ENCODE measurements at regions of chr1 and their contacts with region 1.

Region 1: DNA sequence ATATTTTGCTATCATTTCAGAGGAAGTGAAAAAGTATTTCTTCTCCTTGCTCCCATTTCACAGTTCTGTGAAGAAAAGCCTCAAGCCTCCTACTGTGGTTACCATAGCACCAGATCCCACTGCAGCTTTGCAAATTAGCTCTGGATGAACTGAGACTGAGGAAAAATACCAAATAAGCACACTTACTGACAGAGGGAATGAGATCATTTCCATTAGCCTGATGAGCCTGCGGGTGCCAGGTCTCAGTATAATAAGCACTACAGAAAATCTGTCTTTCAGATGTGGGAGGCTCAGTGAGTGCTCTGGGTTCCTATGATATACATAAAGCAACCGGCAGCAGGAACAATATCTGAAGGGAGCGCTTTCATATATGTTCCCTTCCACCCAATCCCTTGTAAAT is 21.4 kb downstream of the XKR8 start:
- DNase-seq: no peak
- H3K4me3 ChIP-seq: no peak overlapping the region
- H3K27ac ChIP-seq: no peak overlapping the region
- H3K4me1 ChIP-seq: peaks cover 0 to 4% of the 10 kb centered on the region in 2 donors
- H3K27me3 ChIP-seq: no peaks in the 10 kb centered on the region
- CTCF ChIP-seq: no peak
- POLR2A ChIP-seq: no peak

Region 2: DNA sequence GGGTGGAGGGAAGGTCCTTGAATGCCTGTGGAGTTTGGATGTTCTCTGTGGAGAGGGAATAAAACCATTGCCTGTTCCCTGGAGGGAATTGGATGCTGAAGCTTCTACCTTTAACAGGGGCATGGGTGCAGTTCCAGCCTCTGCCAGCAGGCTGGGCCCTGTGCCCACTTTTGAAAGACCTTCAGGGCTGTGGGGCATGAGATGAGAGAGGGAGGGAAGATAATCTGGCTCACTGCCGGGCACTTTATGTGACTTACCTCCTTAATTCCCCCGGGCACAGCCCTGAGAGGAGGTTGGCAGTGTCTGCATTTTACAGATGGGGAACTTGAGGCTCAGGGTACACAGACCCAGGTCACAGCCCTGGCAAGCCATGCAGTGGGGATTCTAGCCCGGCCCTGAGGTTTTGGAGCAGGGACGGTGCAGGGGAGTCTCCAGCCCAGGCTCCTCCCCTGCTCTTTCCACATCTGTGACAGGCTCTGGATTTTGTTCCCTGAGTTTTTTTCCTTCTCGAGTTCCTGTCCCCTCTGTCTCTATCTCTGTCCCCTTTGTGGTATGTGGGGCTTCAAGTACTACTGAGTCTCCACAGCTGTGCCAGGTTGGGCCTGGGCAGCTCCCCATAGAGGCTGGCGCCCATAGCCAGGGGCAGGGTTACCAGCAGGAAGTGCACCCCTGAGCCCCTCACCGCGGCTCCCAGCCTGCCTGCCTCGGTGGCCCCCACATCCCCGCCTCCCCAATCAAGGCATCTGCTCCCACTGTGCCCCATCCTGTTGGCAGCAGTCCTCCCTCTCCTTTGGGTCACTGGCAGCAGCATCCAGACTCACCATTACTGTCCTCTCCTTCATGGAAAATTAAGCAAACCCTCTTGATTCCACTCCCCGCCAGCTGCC is 122.8 kb before region 1 on chr1:
- intact Hi-C with region 1: loop called (anchors 5 kb)
- DNase-seq: peak; percentile 96 to 97
- H3K4me3 ChIP-seq: no peak overlapping the region
- H3K27ac ChIP-seq: peak overlapping the region in 1 of 3 donors; percentile 38
- H3K4me1 ChIP-seq: peaks cover 13 to 20% of the 10 kb centered on the region in 2 donors
- H3K27me3 ChIP-seq: no peaks in the 10 kb centered on the region
- CTCF ChIP-seq: peak; percentile 95 to 98 (median 98)
- POLR2A ChIP-seq: no peak

Measured in thyroid gland (tissue), 4 donors.